RWPE1 (cell line): ENCODE measurements at regions of chr2 and their contacts with region 1.

Region 1: DNA sequence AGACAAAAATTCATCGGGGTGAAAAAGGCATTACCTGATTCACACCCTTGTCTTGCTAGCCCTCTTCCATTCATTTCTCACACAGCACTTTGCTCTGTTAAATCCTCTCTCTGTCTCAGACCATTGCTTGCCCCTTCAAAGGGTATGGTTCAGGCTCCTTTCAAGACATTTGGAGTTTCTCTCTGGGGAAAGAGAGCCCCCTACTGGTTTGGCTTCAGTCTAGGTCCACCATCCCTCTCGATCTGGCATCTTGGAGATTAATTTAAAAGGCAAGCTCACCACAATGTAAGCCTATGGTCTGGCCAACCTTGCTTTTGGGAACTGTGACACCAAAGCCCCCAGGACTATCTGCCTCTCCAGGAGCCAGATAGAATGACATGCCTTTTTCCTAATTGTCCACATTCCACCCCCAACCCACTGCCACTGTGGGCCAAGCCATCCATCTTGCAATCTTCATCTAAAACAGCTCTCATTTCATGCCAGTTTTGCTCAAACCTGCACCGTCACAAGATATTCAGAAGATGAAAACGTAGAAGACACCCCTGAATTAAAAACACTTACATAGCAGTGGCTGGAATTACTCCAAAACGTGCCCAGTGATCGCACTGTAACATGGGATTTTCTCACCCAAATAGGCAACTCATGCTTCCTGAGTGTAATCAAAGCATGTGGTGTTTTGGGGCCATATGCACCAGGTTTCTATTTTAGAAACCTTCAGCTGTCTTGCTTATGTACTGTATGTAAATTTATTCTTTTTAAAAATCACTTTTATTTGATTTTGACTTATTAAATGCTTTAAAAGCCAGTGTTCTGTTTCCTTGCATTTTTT is 93.9 kb downstream of the FARSB start:
- DNase-seq: peak; percentile 56
- H3K27ac ChIP-seq: no peak overlapping the region
- CTCF ChIP-seq: peak; percentile 50

Region 2: GRCh38 chr2:222318026-222318711 is 243.9 kb before region 1 on chr2:
- CTCF ChIA-PET with region 1: interaction called, 17 read pairs
- POLR2A ChIA-PET with region 1: no interaction called
- DNase-seq: peak; percentile 71
- H3K27ac ChIP-seq: peak overlapping the region; percentile 70
- CTCF ChIP-seq: peak; percentile 60